ENCODE measurements at regions of chr6 and their contacts with region 1.

Region 1: GRCh38 chr6:89970609-89971337 is 76.5 kb downstream of the GJA10 start:
- DNase-seq: no peak
- H3K4me3 ChIP-seq: no peak overlapping the region
- H3K27ac ChIP-seq: peak overlapping the region; percentile 10
- H3K4me1 ChIP-seq: peaks cover 34% of the 10 kb centered on the region
- H3K27me3 ChIP-seq: no peaks in the 10 kb centered on the region
- CTCF ChIP-seq: peak; percentile 72

Region 2: GRCh38 chr6:90393232-90393884 is 422.6 kb after region 1 on chr6:
- intact Hi-C with region 1: loop called (anchors 5 kb)
- DNase-seq: no peak
- H3K4me3 ChIP-seq: no peak overlapping the region
- H3K27ac ChIP-seq: no peak overlapping the region
- H3K4me1 ChIP-seq: peaks cover 3% of the 10 kb centered on the region
- H3K27me3 ChIP-seq: no peaks in the 10 kb centered on the region
- CTCF ChIP-seq: peak; percentile 86

Measured in left ventricle myocardium inferior (tissue), 1 donor.